ENCODE measurements at regions of chr2 and their contacts with region 1.

Region 1: GRCh38 chr2:100297511-100297910 is 24.8 kb downstream of the LONRF2 start:
- DNase-seq: no peak
- ATAC-seq: no peak
- H3K4me3 ChIP-seq: no peak overlapping the region
- H3K27ac ChIP-seq: no peak overlapping the region
- H3K4me1 ChIP-seq: no peaks in the 10 kb centered on the region
- H3K27me3 ChIP-seq: peaks cover 0 to 12% of the 10 kb centered on the region in 2 experiments; a peak in 3 of 5 replicates
- CTCF ChIP-seq: no peak
- EP300 ChIP-seq: no peak
- POLR2A ChIP-seq: no peak
- RAD21 ChIP-seq: no peak

Region 2: GRCh38 chr2:98944775-98945174 is 1352.7 kb before region 1 on chr2:
- CTCF ChIA-PET with region 1: no interaction called
- POLR2A ChIA-PET with region 1: no interaction called
- in situ Hi-C with region 1: no loop called
- intact Hi-C with region 1: loop called (anchors 5 kb)
- DNase-seq: no peak
- ATAC-seq: no peak
- H3K4me3 ChIP-seq: no peak overlapping the region
- H3K27ac ChIP-seq: no peak overlapping the region
- H3K4me1 ChIP-seq: peaks cover 11% of the 10 kb centered on the region
- H3K27me3 ChIP-seq: peaks cover 4 to 13% of the 10 kb centered on the region in 2 experiments; a peak in 3 of 5 replicates
- CTCF ChIP-seq: no peak
- EP300 ChIP-seq: no peak
- POLR2A ChIP-seq: no peak
- RAD21 ChIP-seq: no peak

Region 3: GRCh38 chr2:100230754-100231153 is 66.8 kb before region 1 on chr2:
- CTCF ChIA-PET with region 1: no interaction called
- POLR2A ChIA-PET with region 1: no interaction called
- in situ Hi-C with region 1: no loop called
- intact Hi-C with region 1: no loop called
- DNase-seq: no peak
- ATAC-seq: no peak
- H3K4me3 ChIP-seq: no peak overlapping the region
- H3K27ac ChIP-seq: no peak overlapping the region
- H3K4me1 ChIP-seq: no peaks in the 10 kb centered on the region
- H3K27me3 ChIP-seq: peaks cover 0 to 5% of the 10 kb centered on the region in 2 experiments; a peak in 2 of 5 replicates
- CTCF ChIP-seq: no peak
- EP300 ChIP-seq: no peak
- POLR2A ChIP-seq: no peak
- RAD21 ChIP-seq: no peak